Right lobe of liver (tissue), 6 donors: ENCODE measurements at regions of chr9 and their contacts with region 1.

Region 1: GRCh38 chr9:10059044-10059443 is 553.8 kb downstream of the PTPRD start:
- DNase-seq: no peak
- ATAC-seq: no peak
- H3K4me3 ChIP-seq: no peak overlapping the region
- H3K27ac ChIP-seq: no peak overlapping the region
- H3K4me1 ChIP-seq: no peaks in the 10 kb centered on the region
- H3K27me3 ChIP-seq: no peaks in the 10 kb centered on the region
- CTCF ChIP-seq: no peak
- POLR2A ChIP-seq: no peak

Region 2: GRCh38 chr9:9998491-9999287 is 60.4 kb before region 1 on chr9:
- intact Hi-C with region 1: no loop called
- DNase-seq: no peak
- ATAC-seq: peak; percentile 40 to 70 (median 58)
- H3K4me3 ChIP-seq: no peak overlapping the region
- H3K27ac ChIP-seq: no peak overlapping the region
- H3K4me1 ChIP-seq: no peaks in the 10 kb centered on the region
- H3K27me3 ChIP-seq: no peaks in the 10 kb centered on the region
- CTCF ChIP-seq: peak; percentile 10 to 20 (median 14)
- POLR2A ChIP-seq: no peak

Region 3: DNA sequence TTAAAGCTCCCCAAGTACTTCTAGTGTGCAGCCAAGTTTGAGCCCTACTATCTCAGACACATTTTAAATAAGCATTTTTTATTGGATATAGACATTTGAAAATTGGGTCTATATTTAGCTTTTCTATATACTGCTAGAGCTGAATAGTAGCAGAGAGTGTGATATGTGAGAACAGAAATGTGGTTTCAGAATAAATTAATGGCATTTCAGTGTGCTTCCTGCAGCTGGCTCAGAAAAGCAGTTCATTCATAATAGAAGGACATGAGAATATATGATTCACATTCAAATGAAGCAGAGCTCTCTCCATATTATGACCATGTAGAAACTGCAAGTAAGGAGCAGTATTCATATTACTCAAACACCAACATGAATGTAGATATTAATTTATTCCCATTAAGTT is 89.8 kb after region 1 on chr9:
- intact Hi-C with region 1: no loop called
- DNase-seq: no peak
- ATAC-seq: no peak
- H3K4me3 ChIP-seq: no peak overlapping the region
- H3K27ac ChIP-seq: no peak overlapping the region
- H3K4me1 ChIP-seq: peaks cover 0 to 7% (median 0%) of the 10 kb centered on the region in 4 donors
- H3K27me3 ChIP-seq: no peaks in the 10 kb centered on the region
- CTCF ChIP-seq: no peak
- POLR2A ChIP-seq: no peak

Region 4: GRCh38 chr9:10268531-10269485 is 209.8 kb after region 1 on chr9:
- intact Hi-C with region 1: loop called (anchors 10 kb)
- DNase-seq: peak in 2 of 3 donors; percentile 38 to 54
- ATAC-seq: peak; percentile 95 to 99 (median 98)
- H3K4me3 ChIP-seq: no peak overlapping the region
- H3K27ac ChIP-seq: no peak overlapping the region
- H3K4me1 ChIP-seq: no peaks in the 10 kb centered on the region
- H3K27me3 ChIP-seq: no peaks in the 10 kb centered on the region
- CTCF ChIP-seq: peak; percentile 61 to 71 (median 62)
- POLR2A ChIP-seq: no peak